ENCODE measurements at regions of chr7 and their contacts with region 1.

Region 1: GRCh38 chr7:149261829-149262617 is at the start of gene ZNF783:
- DNase-seq: peak; percentile 84 to 89 (median 87)
- H3K4me3 ChIP-seq: peak within 1 kb of the TSS; percentile 52 to 61
- H3K4me3 Mint-ChIP-seq: peak within 1 kb of the TSS; percentile 84 to 92 (median 87)
- H3K27ac ChIP-seq: peak within 1 kb of the TSS; percentile 68
- H3K27ac Mint-ChIP-seq: peak within 1 kb of the TSS; percentile 87 to 95 (median 92)
- H3K4me1 ChIP-seq: peaks cover 25% of the 10 kb centered on the region
- H3K4me1 Mint-ChIP-seq: peaks cover 13 to 33% (median 21%) of the 10 kb centered on the region in 4 donors
- H3K27me3 ChIP-seq: no peaks in the 10 kb centered on the region
- H3K27me3 Mint-ChIP-seq: no peaks in the 10 kb centered on the region
- total RNA-seq, gene ZNF783: 42.6 to 43.5 TPM

Region 2: DNA sequence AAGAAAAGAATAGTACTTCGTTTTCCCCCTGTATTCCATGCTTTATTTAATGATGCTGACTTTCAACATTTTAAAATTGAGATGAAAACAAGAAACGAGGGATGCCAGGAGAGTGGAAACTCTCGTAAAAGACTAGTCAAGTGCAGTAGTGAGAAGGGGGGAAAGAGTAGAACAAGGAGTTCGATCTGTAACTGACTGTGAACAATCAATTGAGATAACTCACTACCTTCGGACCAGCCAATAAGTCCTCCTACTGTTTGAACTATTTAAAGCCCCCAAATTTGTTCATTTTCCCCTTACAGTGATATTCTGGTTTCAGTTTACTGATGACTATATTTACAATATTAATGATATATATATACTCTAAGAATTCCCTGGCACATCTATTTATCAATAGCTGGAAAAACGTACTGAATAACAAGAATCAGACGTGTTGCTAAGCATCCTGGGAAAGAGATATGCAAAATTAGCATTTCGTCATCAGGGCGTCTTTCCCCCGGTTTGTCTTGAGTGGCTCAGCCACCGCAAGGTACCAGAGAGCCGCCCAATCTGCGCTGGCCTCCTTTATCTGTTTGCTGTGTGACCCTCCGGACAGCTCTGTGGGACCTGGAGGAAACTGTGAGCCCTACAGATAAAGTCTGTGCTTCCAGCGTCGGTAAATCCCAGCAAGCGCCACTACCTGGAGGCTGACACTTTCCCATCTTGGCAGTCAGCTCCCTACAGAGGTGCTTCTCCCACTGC is 274.8 kb before region 1 on chr7:
- CTCF ChIA-PET with region 1: no interaction called
- POLR2A ChIA-PET with region 1: no interaction called
- intact Hi-C with region 1: loop called (anchors 10 kb)
- DNase-seq: peak; percentile 89 to 91 (median 90)
- H3K4me3 ChIP-seq: peak overlapping the region; percentile 95 to 98
- H3K4me3 Mint-ChIP-seq: peak overlapping the region; percentile 93 to 99 (median 98)
- H3K27ac ChIP-seq: peak overlapping the region; percentile 83
- H3K27ac Mint-ChIP-seq: peak overlapping the region; percentile 96 to 100 (median 98)
- H3K4me1 ChIP-seq: peaks cover 46% of the 10 kb centered on the region
- H3K4me1 Mint-ChIP-seq: peaks cover 27 to 59% (median 45%) of the 10 kb centered on the region in 4 donors
- H3K27me3 ChIP-seq: no peaks in the 10 kb centered on the region
- H3K27me3 Mint-ChIP-seq: peaks cover 2 to 5% of the 10 kb centered on the region in 2 donors

Region 3: DNA sequence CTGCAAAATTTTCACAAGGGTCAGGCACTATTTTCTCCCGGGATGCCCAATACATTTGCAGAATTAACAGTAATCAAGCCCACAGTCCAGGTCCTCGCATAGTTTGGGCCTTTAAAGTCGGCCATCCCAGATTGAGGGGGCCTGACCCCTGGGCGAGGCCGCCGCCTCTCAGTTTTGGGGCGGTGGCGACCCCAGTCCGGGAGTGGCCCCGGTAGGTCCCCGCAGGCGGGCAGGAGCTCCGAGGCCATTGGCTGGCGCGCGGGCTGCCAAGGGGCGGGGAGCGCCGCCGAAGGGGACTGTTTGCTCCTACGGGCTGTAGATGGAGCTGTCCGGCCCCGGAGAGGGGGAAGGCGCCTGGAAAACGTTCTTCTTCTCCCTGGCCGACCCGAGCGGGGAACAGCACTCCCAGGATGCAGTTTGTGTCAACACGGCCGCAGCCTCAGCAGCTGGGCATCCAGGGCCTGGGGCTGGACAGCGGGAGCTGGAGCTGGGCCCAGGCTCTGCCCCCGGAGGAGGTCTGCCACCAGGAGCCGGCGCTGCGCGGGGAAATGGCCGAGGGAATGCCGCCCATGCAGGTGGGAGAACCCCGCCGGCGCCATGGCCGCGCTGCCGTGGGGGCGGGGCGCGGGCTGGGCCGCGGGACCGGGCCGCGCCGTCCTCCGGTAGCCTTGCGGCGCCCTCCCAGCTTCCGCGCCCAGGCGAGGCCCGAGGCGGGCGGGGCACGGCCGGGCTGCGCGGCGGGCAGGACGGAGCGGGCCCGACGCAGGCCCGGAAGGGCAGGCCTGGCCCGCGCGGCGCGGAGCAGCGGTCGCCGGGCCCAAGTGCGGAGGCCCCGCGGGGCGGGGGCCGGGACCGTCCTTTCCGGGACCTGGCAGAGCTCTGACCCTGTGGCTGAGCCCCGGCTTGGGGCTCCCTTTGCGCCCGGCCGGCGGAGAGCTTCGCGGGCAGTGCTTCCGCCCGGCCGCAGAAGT is 66.6 kb before region 1 on chr7 and contains the start of gene ZNF282:
- CTCF ChIA-PET with region 1: interaction called, 3 read pairs
- POLR2A ChIA-PET with region 1: interaction called, 17 read pairs
- intact Hi-C with region 1: no loop called
- DNase-seq: peak; percentile 54 to 66 (median 61)
- H3K4me3 ChIP-seq: peak within 1 kb of the TSS; percentile 70 to 76
- H3K4me3 Mint-ChIP-seq: peak within 1 kb of the TSS; percentile 88 to 97 (median 91)
- H3K27ac ChIP-seq: peak within 1 kb of the TSS; percentile 68
- H3K27ac Mint-ChIP-seq: peak within 1 kb of the TSS; percentile 81 to 95 (median 89)
- H3K4me1 ChIP-seq: peaks cover 23% of the 10 kb centered on the region
- H3K4me1 Mint-ChIP-seq: peaks cover 18 to 48% (median 32%) of the 10 kb centered on the region in 4 donors
- H3K27me3 ChIP-seq: no peaks in the 10 kb centered on the region
- H3K27me3 Mint-ChIP-seq: no peaks in the 10 kb centered on the region
- total RNA-seq, gene ZNF282: 19.1 to 20.7 TPM

Region 4: GRCh38 chr7:149284850-149285626 is 23.0 kb after region 1 on chr7:
- CTCF ChIA-PET with region 1: interaction called, 63 read pairs
- POLR2A ChIA-PET with region 1: interaction called, 102 read pairs
- intact Hi-C with region 1: loop called (anchors 1 kb)
- DNase-seq: peak; percentile 96 to 98 (median 98)
- H3K4me3 ChIP-seq: peak overlapping the region; percentile 49 to 72
- H3K4me3 Mint-ChIP-seq: peak overlapping the region; percentile 80 to 96 (median 90)
- H3K27ac ChIP-seq: peak overlapping the region; percentile 57
- H3K27ac Mint-ChIP-seq: peak overlapping the region; percentile 87 to 93 (median 91)
- H3K4me1 ChIP-seq: peaks cover 38% of the 10 kb centered on the region
- H3K4me1 Mint-ChIP-seq: peaks cover 26 to 53% (median 40%) of the 10 kb centered on the region in 4 donors
- H3K27me3 ChIP-seq: no peaks in the 10 kb centered on the region
- H3K27me3 Mint-ChIP-seq: no peaks in the 10 kb centered on the region

Region 5: GRCh38 chr7:149497456-149498261 is 235.6 kb after region 1 on chr7 and contains the start of gene ZNF746:
- CTCF ChIA-PET with region 1: no interaction called
- POLR2A ChIA-PET with region 1: interaction called, 4 read pairs
- intact Hi-C with region 1: loop called (anchors 1 kb)
- DNase-seq: peak; percentile 77 to 81 (median 78)
- H3K4me3 ChIP-seq: peak within 1 kb of the TSS; percentile 62 to 84
- H3K4me3 Mint-ChIP-seq: peak within 1 kb of the TSS; percentile 92 to 99 (median 95)
- H3K27ac ChIP-seq: peak within 1 kb of the TSS; percentile 63
- H3K27ac Mint-ChIP-seq: peak within 1 kb of the TSS; percentile 91 to 98 (median 96)
- H3K4me1 ChIP-seq: peaks cover 31% of the 10 kb centered on the region
- H3K4me1 Mint-ChIP-seq: peaks cover 21 to 44% (median 27%) of the 10 kb centered on the region in 4 donors
- H3K27me3 ChIP-seq: no peaks in the 10 kb centered on the region
- H3K27me3 Mint-ChIP-seq: no peaks in the 10 kb centered on the region
- total RNA-seq, gene ZNF746: 25.2 to 25.6 TPM